Naive thymus-derived CD4-positive, alpha-beta T cell (primary cell): ENCODE measurements at regions of chr6 and their contacts with region 1.

Region 1: GRCh38 chr6:157764178-157765033 is 58.6 kb upstream of the SNX9 start:
- DNase-seq: peak; percentile 58 to 96 (median 93)
- ATAC-seq: peak; percentile 87
- H3K4me3 ChIP-seq: peak overlapping the region; percentile 49
- H3K4me3 Mint-ChIP-seq: peak overlapping the region; percentile 71 to 84 (median 78)
- H3K27ac ChIP-seq: peak overlapping the region; percentile 56
- H3K27ac Mint-ChIP-seq: peak overlapping the region; percentile 90 to 99 (median 96)
- H3K4me1 ChIP-seq: peaks cover 27 to 65% of the 10 kb centered on the region in 2 donors
- H3K4me1 Mint-ChIP-seq: peaks cover 43 to 91% (median 75%) of the 10 kb centered on the region in 7 donors
- H3K27me3 ChIP-seq: no peaks in the 10 kb centered on the region
- H3K27me3 Mint-ChIP-seq: peaks cover 0 to 31% (median 0%) of the 10 kb centered on the region in 5 donors

Region 2: DNA sequence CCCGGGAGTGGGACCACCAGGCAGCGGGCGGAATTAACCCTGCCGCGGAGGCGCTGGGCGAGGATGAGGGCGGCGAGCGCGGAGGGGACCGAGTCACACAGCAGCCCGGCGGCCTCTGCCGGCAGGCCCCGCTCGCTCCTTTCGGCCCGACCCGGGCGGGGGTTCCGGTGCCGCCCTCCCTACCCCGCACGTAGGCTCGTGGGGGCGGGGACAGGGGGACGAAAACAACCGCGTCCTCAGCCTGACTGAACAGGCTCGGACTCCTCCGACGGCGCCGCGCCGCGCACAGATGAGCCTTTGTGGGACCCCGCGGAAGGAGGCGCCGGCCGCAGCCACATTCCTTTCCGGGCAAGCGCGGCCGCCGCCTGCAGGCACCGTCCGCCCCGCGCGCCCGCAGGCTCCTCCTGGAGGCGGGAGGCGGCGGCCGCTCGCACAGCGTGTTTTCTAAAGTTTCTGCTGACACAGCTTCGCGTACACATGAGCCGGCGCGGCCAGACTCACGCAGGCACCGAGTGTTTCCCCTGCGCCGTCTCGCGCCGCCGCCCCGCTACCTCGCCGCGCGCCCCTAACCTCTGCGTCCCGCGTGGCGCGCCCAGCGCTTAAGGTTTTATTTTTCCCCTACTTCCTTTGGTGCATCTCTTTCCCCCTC is 742.9 kb before region 1 on chr6:
- CTCF ChIA-PET with region 1: no interaction called
- POLR2A ChIA-PET with region 1: no interaction called
- intact Hi-C with region 1: loop called in 1 of 2 experiments (anchors 10 kb)
- DNase-seq: peak; percentile 85 to 93 (median 91)
- ATAC-seq: peak; percentile 90
- H3K4me3 ChIP-seq: peak overlapping the region; percentile 79
- H3K4me3 Mint-ChIP-seq: peak overlapping the region; percentile 76 to 98 (median 95)
- H3K27ac ChIP-seq: peak overlapping the region; percentile 100
- H3K27ac Mint-ChIP-seq: peak overlapping the region; percentile 86 to 100 (median 99)
- H3K4me1 ChIP-seq: peaks cover 5 to 21% of the 10 kb centered on the region in 2 donors
- H3K4me1 Mint-ChIP-seq: peaks cover 32 to 82% (median 64%) of the 10 kb centered on the region in 7 donors
- H3K27me3 ChIP-seq: no peaks in the 10 kb centered on the region
- H3K27me3 Mint-ChIP-seq: no peaks in the 10 kb centered on the region

Region 3: GRCh38 chr6:157461000-157461915 is 303.1 kb before region 1 on chr6:
- CTCF ChIA-PET with region 1: no interaction called
- POLR2A ChIA-PET with region 1: no interaction called
- intact Hi-C with region 1: loop called in 1 of 2 experiments (anchors 5 kb)
- DNase-seq: peak in 2 of 9 donors; percentile 2 to 72
- ATAC-seq: peak; percentile 71
- H3K4me3 ChIP-seq: no peak overlapping the region
- H3K4me3 Mint-ChIP-seq: peak overlapping the region in 1 of 10 donors; percentile 61
- H3K27ac ChIP-seq: no peak overlapping the region
- H3K27ac Mint-ChIP-seq: peak overlapping the region in 1 of 9 donors; percentile 88
- H3K4me1 ChIP-seq: peaks cover 3 to 10% of the 10 kb centered on the region in 2 donors
- H3K4me1 Mint-ChIP-seq: peaks cover 4 to 67% (median 5%) of the 10 kb centered on the region in 7 donors
- H3K27me3 ChIP-seq: no peaks in the 10 kb centered on the region
- H3K27me3 Mint-ChIP-seq: no peaks in the 10 kb centered on the region

Region 4: DNA sequence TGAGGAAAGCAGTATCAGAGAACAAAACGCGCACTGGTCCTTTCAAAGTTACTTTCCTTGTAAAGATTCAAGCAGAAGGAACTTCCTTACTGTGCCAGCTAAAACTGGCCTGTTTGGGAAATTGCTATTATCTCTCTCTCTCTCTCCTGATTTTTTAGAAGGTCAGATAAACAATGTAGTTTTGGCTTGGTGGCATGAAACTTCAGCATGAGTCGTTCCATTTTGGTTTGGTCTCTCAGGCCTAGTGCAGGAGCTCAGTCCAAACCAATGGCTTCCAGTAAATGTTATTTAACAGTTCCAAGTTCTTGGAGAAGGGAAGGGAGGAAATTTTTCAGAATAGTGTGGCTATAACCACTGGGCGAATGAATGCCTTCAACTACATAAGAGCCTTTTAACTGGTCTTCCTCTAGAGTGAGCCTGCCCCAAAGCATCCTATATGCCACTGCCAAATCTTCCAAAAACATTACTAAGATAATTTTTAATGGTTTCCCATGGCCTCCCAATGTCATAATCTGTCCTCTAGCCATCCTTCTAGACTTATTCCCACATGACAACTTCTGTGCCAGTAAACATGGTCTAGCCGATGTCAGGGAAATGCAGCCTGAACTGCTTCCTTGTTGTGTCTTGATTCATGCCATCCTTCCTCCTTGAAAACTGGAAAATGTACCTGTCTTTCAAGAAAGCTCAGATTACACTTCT is 49.5 kb after region 1 on chr6:
- CTCF ChIA-PET with region 1: interaction called, 3 read pairs
- POLR2A ChIA-PET with region 1: interaction called, 6 read pairs
- intact Hi-C with region 1: loop called in 1 of 2 experiments (anchors 2 kb)
- DNase-seq: no peak
- ATAC-seq: no peak
- H3K4me3 ChIP-seq: no peak overlapping the region
- H3K4me3 Mint-ChIP-seq: peak overlapping the region in 5 of 10 donors; percentile 11 to 72 (median 70)
- H3K27ac ChIP-seq: peak overlapping the region; percentile 54
- H3K27ac Mint-ChIP-seq: peak overlapping the region in 8 of 9 donors; percentile 85 to 92 (median 89)
- H3K4me1 ChIP-seq: peaks cover 0 to 41% of the 10 kb centered on the region in 2 donors
- H3K4me1 Mint-ChIP-seq: peaks cover 22 to 75% (median 68%) of the 10 kb centered on the region in 7 donors
- H3K27me3 ChIP-seq: no peaks in the 10 kb centered on the region
- H3K27me3 Mint-ChIP-seq: peaks cover 0 to 50% (median 0%) of the 10 kb centered on the region in 5 donors

Region 5: GRCh38 chr6:157873735-157874344 is 109.4 kb after region 1 on chr6:
- CTCF ChIA-PET with region 1: interaction called, 53 read pairs
- POLR2A ChIA-PET with region 1: interaction called, 9 read pairs
- intact Hi-C with region 1: loop called (anchors 1 to 2 kb)
- DNase-seq: peak; percentile 65 to 84 (median 80)
- ATAC-seq: peak; percentile 87
- H3K4me3 ChIP-seq: no peak overlapping the region
- H3K4me3 Mint-ChIP-seq: peak overlapping the region in 2 of 10 donors; percentile 14 to 21
- H3K27ac ChIP-seq: no peak overlapping the region
- H3K27ac Mint-ChIP-seq: peak overlapping the region in 7 of 9 donors; percentile 26 to 87 (median 56)
- H3K4me1 ChIP-seq: peaks cover 0 to 25% of the 10 kb centered on the region in 2 donors
- H3K4me1 Mint-ChIP-seq: peaks cover 4 to 47% (median 44%) of the 10 kb centered on the region in 7 donors
- H3K27me3 ChIP-seq: no peaks in the 10 kb centered on the region
- H3K27me3 Mint-ChIP-seq: no peaks in the 10 kb centered on the region

Region 6: GRCh38 chr6:157962601-157963302 is 198.3 kb after region 1 on chr6:
- CTCF ChIA-PET with region 1: no interaction called
- POLR2A ChIA-PET with region 1: no interaction called
- intact Hi-C with region 1: loop called in 1 of 2 experiments (anchors 2 kb)
- DNase-seq: peak in 4 of 9 donors; percentile 26 to 50 (median 41)
- ATAC-seq: peak; percentile 31
- H3K4me3 ChIP-seq: peak overlapping the region; percentile 14
- H3K4me3 Mint-ChIP-seq: peak overlapping the region; percentile 51 to 84 (median 72)
- H3K27ac ChIP-seq: peak overlapping the region; percentile 25
- H3K27ac Mint-ChIP-seq: peak overlapping the region; percentile 77 to 97 (median 89)
- H3K4me1 ChIP-seq: peaks cover 0 to 14% of the 10 kb centered on the region in 2 donors
- H3K4me1 Mint-ChIP-seq: peaks cover 8 to 32% (median 28%) of the 10 kb centered on the region in 7 donors
- H3K27me3 ChIP-seq: no peaks in the 10 kb centered on the region
- H3K27me3 Mint-ChIP-seq: no peaks in the 10 kb centered on the region

Region 7: GRCh38 chr6:158207422-158207788 is 443.0 kb after region 1 on chr6:
- CTCF ChIA-PET with region 1: no interaction called
- POLR2A ChIA-PET with region 1: no interaction called
- intact Hi-C with region 1: loop called in 1 of 2 experiments (anchors 2 kb)
- DNase-seq: peak in 4 of 9 donors; percentile 9 to 42 (median 18)
- ATAC-seq: peak; percentile 54
- H3K4me3 ChIP-seq: no peak overlapping the region
- H3K4me3 Mint-ChIP-seq: peak overlapping the region in 7 of 10 donors; percentile 2 to 66 (median 22)
- H3K27ac ChIP-seq: no peak overlapping the region
- H3K27ac Mint-ChIP-seq: peak overlapping the region in 7 of 9 donors; percentile 4 to 90 (median 25)
- H3K4me1 ChIP-seq: no peaks in the 10 kb centered on the region
- H3K4me1 Mint-ChIP-seq: peaks cover 6 to 47% (median 13%) of the 10 kb centered on the region in 7 donors
- H3K27me3 ChIP-seq: no peaks in the 10 kb centered on the region
- H3K27me3 Mint-ChIP-seq: peaks cover 0 to 10% (median 4%) of the 10 kb centered on the region in 5 donors